Calu3 (cell line): ENCODE measurements at regions of chr3 and their contacts with region 1.

Region 1: DNA sequence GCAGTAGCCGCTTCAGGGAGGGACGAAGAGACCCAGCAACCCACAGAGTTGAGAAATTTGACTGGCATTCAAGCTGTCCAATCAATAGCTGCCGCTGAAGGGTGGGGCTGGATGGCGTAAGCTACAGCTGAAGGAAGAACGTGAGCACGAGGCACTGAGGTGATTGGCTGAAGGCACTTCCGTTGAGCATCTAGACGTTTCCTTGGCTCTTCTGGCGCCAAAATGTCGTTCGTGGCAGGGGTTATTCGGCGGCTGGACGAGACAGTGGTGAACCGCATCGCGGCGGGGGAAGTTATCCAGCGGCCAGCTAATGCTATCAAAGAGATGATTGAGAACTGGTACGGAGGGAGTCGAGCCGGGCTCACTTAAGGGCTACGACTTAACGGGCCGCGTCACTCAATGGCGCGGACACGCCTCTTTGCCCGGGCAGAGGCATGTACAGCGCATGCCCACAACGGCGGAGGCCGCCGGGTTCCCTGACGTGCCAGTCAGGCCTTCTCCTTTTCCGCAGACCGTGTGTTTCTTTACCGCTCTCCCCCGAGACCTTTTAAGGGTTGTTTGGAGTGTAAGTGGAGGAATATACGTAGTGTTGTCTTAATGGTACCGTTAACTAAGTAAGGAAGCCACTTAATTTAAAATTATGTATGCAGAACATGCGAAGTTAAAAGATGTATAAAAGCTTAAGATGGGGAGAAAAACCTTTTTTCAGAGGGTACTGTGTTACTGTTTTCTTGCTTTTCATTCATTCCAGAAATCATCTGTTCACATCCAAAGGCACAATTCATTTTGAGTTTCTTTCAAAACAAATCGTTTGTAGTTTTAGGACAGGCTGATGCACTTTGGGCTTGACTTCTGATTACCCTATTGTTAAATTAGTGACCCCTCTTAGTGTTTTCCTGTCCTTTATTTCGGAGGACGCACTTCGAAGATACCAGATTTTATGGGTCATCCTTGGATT is at the start of gene MLH1:
- DNase-seq: peak; percentile 98
- H3K4me3 Mint-ChIP-seq: no peak within 1 kb of the TSS
- H3K27ac Mint-ChIP-seq: no peak within 1 kb of the TSS
- H3K4me1 Mint-ChIP-seq: no peaks in the 10 kb centered on the region
- H3K27me3 Mint-ChIP-seq: no peaks in the 10 kb centered on the region
- CTCF ChIP-seq: no peak
- total RNA-seq, gene MLH1: 30.1 and 32.8 TPM in 2 replicates

Region 2: GRCh38 chr3:36201546-36201945 is 792.1 kb before region 1 on chr3:
- CTCF ChIA-PET with region 1: no interaction called
- intact Hi-C with region 1: no loop called
- DNase-seq: no peak
- H3K4me3 Mint-ChIP-seq: no peak overlapping the region
- H3K27ac Mint-ChIP-seq: no peak overlapping the region
- H3K4me1 Mint-ChIP-seq: no peaks in the 10 kb centered on the region
- H3K27me3 Mint-ChIP-seq: no peaks in the 10 kb centered on the region
- CTCF ChIP-seq: no peak

Region 3: DNA sequence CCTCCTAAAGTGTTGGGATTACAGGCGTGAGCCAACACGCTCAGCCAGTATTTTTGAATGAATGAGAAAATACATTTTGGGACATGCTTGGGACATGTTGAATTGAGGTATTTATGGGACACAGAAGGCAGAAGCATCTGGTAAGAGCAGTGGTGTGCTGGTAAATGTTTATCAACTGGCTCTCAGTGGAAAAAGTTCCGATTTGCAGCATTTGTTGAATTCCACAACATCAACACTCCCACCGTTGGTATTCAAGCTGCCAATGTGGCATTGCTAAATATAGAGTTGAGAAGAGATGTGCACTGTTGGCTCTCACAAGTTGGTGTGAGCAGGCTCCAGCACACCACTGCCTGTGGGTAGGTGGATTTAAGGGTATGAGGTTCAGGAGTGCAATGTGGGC is 216.6 kb after region 1 on chr3:
- CTCF ChIA-PET with region 1: no interaction called
- intact Hi-C with region 1: loop called (anchors 2 kb)
- DNase-seq: no peak
- H3K4me3 Mint-ChIP-seq: no peak overlapping the region
- H3K27ac Mint-ChIP-seq: no peak overlapping the region
- H3K4me1 Mint-ChIP-seq: no peaks in the 10 kb centered on the region
- H3K27me3 Mint-ChIP-seq: no peaks in the 10 kb centered on the region
- CTCF ChIP-seq: no peak